Esophagus muscularis mucosa (tissue), 4 donors: ENCODE measurements at regions of chr1 and their contacts with region 1.

Region 1: GRCh38 chr1:44652445-44653106 is 21.7 kb downstream of the TMEM53 start:
- DNase-seq: no peak
- H3K4me3 ChIP-seq: no peak overlapping the region
- H3K27ac ChIP-seq: peak overlapping the region; percentile 2 to 31 (median 25)
- H3K4me1 ChIP-seq: peaks cover 0 to 8% (median 2%) of the 10 kb centered on the region in 4 donors
- H3K27me3 ChIP-seq: no peaks in the 10 kb centered on the region
- CTCF ChIP-seq: peak; percentile 93 to 98 (median 97)
- EP300 ChIP-seq: no peak
- POLR2A ChIP-seq: no peak

Region 2: DNA sequence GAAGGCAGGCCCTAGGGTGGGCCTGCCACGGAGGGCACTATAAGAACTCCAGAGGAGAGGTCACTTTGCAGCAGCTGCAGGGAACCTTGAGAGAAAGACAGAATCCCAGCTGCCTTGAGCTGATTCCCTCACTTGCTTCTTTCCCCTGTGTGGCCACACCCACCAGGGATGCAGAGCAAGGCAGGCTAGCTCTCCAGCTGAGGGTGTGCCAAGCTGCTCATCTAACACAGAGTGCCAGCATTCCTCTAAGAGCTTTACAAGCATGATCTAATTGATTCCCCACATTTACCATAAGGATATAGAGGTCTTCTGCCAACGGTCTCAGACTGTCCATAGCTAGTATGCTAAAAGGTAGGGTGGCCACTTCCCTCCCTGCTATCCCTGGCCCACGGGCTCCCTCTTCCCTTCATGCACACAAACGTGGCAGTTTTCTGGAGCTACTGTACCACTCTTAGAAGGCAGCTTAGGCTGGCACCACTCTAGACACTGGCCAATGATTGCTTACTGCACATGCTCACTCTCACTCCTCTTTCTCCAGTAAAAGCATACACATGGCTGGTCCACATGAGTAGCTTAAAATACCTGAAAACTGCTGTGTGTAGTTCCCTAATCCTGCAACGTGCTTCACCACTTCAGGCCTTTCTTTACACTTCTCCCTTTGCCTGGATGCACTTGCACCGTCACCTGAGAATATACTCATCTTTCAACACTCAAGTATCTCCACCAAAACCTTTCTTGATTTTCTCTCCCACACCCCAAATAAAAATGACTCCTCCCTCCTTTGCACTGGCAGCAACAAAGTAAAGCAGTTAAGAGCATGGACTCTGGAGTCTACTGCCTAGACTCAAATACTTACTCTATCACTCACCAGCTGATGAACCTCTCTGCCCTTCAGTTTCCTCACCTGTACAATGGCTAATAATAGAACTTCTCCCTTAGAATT is 381.6 kb before region 1 on chr1:
- intact Hi-C with region 1: no loop called
- DNase-seq: no peak
- H3K4me3 ChIP-seq: no peak overlapping the region
- H3K27ac ChIP-seq: no peak overlapping the region
- H3K4me1 ChIP-seq: peaks cover 0 to 17% (median 9%) of the 10 kb centered on the region in 4 donors
- H3K27me3 ChIP-seq: no peaks in the 10 kb centered on the region
- CTCF ChIP-seq: no peak
- EP300 ChIP-seq: no peak
- POLR2A ChIP-seq: no peak

Region 3: GRCh38 chr1:44300852-44301251 is 351.7 kb before region 1 on chr1:
- intact Hi-C with region 1: no loop called
- DNase-seq: no peak
- H3K4me3 ChIP-seq: no peak overlapping the region
- H3K27ac ChIP-seq: no peak overlapping the region
- H3K4me1 ChIP-seq: no peaks in the 10 kb centered on the region
- H3K27me3 ChIP-seq: no peaks in the 10 kb centered on the region
- CTCF ChIP-seq: no peak
- EP300 ChIP-seq: no peak
- POLR2A ChIP-seq: no peak

Region 4: GRCh38 chr1:44339731-44340130 is 312.8 kb before region 1 on chr1:
- intact Hi-C with region 1: no loop called
- DNase-seq: no peak
- H3K4me3 ChIP-seq: no peak overlapping the region
- H3K27ac ChIP-seq: no peak overlapping the region
- H3K4me1 ChIP-seq: peaks cover 0 to 9% (median 3%) of the 10 kb centered on the region in 4 donors
- H3K27me3 ChIP-seq: no peaks in the 10 kb centered on the region
- CTCF ChIP-seq: no peak
- EP300 ChIP-seq: no peak
- POLR2A ChIP-seq: no peak

Region 5: GRCh38 chr1:44609412-44609767 is 43.2 kb before region 1 on chr1:
- intact Hi-C with region 1: loop called (anchors 2 kb)
- DNase-seq: no peak
- H3K4me3 ChIP-seq: no peak overlapping the region
- H3K27ac ChIP-seq: no peak overlapping the region
- H3K4me1 ChIP-seq: peaks cover 0 to 5% (median 0%) of the 10 kb centered on the region in 4 donors
- H3K27me3 ChIP-seq: peaks cover 0 to 3% (median 0%) of the 10 kb centered on the region in 4 donors
- CTCF ChIP-seq: peak; percentile 64 to 76 (median 67)
- EP300 ChIP-seq: no peak
- POLR2A ChIP-seq: no peak

Region 6: GRCh38 chr1:44747878-44748277 is 95.3 kb after region 1 on chr1:
- intact Hi-C with region 1: no loop called
- DNase-seq: no peak
- H3K4me3 ChIP-seq: no peak overlapping the region
- H3K27ac ChIP-seq: no peak overlapping the region
- H3K4me1 ChIP-seq: no peaks in the 10 kb centered on the region
- H3K27me3 ChIP-seq: no peaks in the 10 kb centered on the region
- CTCF ChIP-seq: no peak
- EP300 ChIP-seq: no peak
- POLR2A ChIP-seq: no peak